ENCODE measurements at regions of chr2 and their contacts with region 1.

Region 1: GRCh38 chr2:213021971-213022899 is 129.2 kb downstream of the IKZF2 start:
- DNase-seq: peak; percentile 45
- ATAC-seq: peak; percentile 93
- H3K4me3 Mint-ChIP-seq: peak overlapping the region; percentile 2
- H3K27ac Mint-ChIP-seq: peak overlapping the region; percentile 68
- H3K4me1 Mint-ChIP-seq: peaks cover 30% of the 10 kb centered on the region
- H3K27me3 Mint-ChIP-seq: peaks cover 8% of the 10 kb centered on the region
- CTCF ChIP-seq: no peak

Region 2: GRCh38 chr2:212723226-212723625 is 299.0 kb before region 1 on chr2:
- CTCF ChIA-PET with region 1: no interaction called
- POLR2A ChIA-PET with region 1: no interaction called
- intact Hi-C with region 1: no loop called
- DNase-seq: peak; percentile 48
- ATAC-seq: peak; percentile 43
- H3K4me3 Mint-ChIP-seq: no peak overlapping the region
- H3K27ac Mint-ChIP-seq: peak overlapping the region; percentile 61
- H3K4me1 Mint-ChIP-seq: peaks cover 29% of the 10 kb centered on the region
- H3K27me3 Mint-ChIP-seq: peaks cover 1% of the 10 kb centered on the region
- CTCF ChIP-seq: no peak

Region 3: GRCh38 chr2:212745359-212745758 is 276.9 kb before region 1 on chr2:
- CTCF ChIA-PET with region 1: no interaction called
- POLR2A ChIA-PET with region 1: no interaction called
- intact Hi-C with region 1: no loop called
- DNase-seq: no peak
- ATAC-seq: no peak
- H3K4me3 Mint-ChIP-seq: no peak overlapping the region
- H3K27ac Mint-ChIP-seq: no peak overlapping the region
- H3K4me1 Mint-ChIP-seq: no peaks in the 10 kb centered on the region
- H3K27me3 Mint-ChIP-seq: no peaks in the 10 kb centered on the region
- CTCF ChIP-seq: no peak

Region 4: GRCh38 chr2:212958757-212959295 is 63.4 kb before region 1 on chr2:
- CTCF ChIA-PET with region 1: no interaction called
- POLR2A ChIA-PET with region 1: no interaction called
- intact Hi-C with region 1: loop called (anchors 5 kb)
- DNase-seq: no peak
- ATAC-seq: peak; percentile 47
- H3K4me3 Mint-ChIP-seq: peak overlapping the region; percentile 3
- H3K27ac Mint-ChIP-seq: peak overlapping the region; percentile 68
- H3K4me1 Mint-ChIP-seq: peaks cover 41% of the 10 kb centered on the region
- H3K27me3 Mint-ChIP-seq: no peaks in the 10 kb centered on the region
- CTCF ChIP-seq: no peak

Measured in activated CD8-positive, alpha-beta T cell treated with anti-CD3 and anti-CD28 coated beads for 36 hours (primary cell).